Activated T-helper 2 cell treated with anti-CD3 and anti-CD28 coated beads, Interferon-gamma antibody, Interleukin-2, Interleukin-4, amounts not matched to agents 10 μg/mL and 5 μg/mL and 100 μg/mL, durations not matched to agents 14 hours and 24 hours and 36 hours (primary cell): ENCODE measurements at regions of chr13 and their contacts with region 1.

Region 1: DNA sequence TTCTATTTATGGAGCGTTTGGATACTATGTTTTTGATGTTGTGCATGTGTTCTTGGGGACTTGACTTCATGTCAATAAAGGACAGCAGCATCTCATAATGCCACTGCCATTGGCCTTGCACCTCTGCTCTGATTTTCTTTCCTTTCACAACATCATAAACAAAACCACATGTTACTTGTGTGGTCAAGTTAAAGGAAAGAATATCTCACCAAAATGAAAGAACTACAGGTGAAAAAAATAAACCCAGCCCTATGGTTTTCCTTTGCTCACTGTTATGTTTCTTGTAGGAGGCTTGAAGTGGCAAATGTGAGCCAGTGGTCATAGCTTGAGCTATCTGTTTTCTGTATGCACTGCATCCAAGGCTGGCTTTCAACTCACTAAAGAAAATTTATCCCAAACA is 240.4 kb downstream of the KCNRG start:
- DNase-seq: no peak
- H3K4me3 Mint-ChIP-seq: no peak overlapping the region
- H3K27ac Mint-ChIP-seq: no peak overlapping the region
- H3K4me1 Mint-ChIP-seq: peaks cover 27% of the 10 kb centered on the region
- H3K27me3 Mint-ChIP-seq: peaks cover 66% of the 10 kb centered on the region

Region 2: GRCh38 chr13:50187352-50188029 is 68.1 kb before region 1 on chr13:
- intact Hi-C with region 1: no loop called
- DNase-seq: no peak
- H3K4me3 Mint-ChIP-seq: no peak overlapping the region
- H3K27ac Mint-ChIP-seq: no peak overlapping the region
- H3K4me1 Mint-ChIP-seq: peaks cover 15% of the 10 kb centered on the region
- H3K27me3 Mint-ChIP-seq: peaks cover 43% of the 10 kb centered on the region

Region 3: DNA sequence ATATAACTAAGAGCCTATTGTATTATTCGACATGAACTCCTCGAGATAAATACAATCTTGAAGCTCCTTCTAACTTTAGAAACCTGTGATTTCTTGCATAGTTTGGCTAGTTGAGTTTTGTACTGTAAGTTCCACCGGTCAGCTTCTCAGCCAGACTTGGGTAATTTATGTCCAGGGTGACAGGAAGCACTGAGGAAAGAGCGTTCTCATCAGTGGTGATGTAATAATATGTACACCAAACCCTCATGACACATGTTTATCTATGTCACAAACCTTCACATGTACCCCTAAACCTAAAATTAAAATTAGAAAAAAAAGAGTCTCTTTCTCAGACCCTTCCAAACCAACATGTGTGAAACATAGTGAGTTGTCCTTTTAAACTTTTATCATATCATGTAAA is 34.7 kb before region 1 on chr13:
- intact Hi-C with region 1: no loop called
- DNase-seq: no peak
- H3K4me3 Mint-ChIP-seq: no peak overlapping the region
- H3K27ac Mint-ChIP-seq: no peak overlapping the region
- H3K4me1 Mint-ChIP-seq: peaks cover 21% of the 10 kb centered on the region
- H3K27me3 Mint-ChIP-seq: peaks cover 69% of the 10 kb centered on the region

Region 4: DNA sequence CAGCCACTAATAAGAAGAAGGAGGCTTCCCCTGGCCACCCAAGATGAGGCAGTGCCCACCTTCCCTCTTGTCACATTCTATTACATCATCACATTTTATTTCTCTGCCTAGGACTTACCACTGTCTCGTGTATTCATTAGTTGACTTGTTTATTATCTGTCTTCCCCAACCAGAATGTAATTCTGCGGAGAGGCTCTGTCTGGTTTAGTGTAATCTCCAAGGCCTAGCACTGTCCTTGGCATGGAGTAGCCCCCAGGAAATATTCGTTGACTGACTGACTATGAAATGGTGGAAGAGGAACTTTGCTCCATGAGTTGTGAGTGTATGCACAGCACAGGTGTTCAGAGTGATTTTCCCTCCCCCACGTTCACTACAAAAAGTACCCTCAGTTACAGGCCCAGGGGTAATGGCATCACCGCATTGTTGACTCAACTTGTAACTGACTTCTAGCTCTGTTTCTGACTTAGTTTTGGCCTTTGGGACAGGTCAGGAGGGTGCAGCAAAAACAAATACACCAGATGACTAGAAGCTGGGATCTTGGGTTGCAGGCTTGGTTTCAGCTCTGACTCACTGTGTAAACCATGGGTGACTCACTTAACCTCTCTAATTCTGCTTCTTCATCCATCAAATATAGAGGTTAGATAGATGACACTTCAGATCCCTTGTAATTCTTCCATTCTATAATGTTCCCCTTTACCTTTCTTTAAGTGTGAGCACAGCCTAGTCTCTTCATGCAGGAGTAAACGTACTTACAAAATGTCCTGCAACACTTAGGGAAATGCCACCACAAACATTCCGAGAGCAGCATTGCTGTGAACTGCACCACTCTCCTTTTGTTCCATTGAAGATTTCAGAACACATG is 10.7 kb before region 1 on chr13:
- intact Hi-C with region 1: loop called (anchors 1 kb)
- DNase-seq: peak; percentile 28
- H3K4me3 Mint-ChIP-seq: peak overlapping the region; percentile 10
- H3K27ac Mint-ChIP-seq: peak overlapping the region; percentile 34
- H3K4me1 Mint-ChIP-seq: peaks cover 36% of the 10 kb centered on the region
- H3K27me3 Mint-ChIP-seq: peaks cover 53% of the 10 kb centered on the region